ENCODE measurements at regions of chr1 and their contacts with region 1.

Region 1: GRCh38 chr1:111733183-111733991 is 5.8 kb downstream of the INKA2 start:
- DNase-seq: peak in 1 of 10 donors; percentile 63
- H3K4me3 ChIP-seq: peak overlapping the region in 31 of 59 donors; percentile 1 to 84 (median 19)
- H3K27ac ChIP-seq: peak overlapping the region in 56 of 59 donors; percentile 14 to 96 (median 70)
- H3K27me3 ChIP-seq: no peaks in the 10 kb centered on the region
- CTCF ChIP-seq: no peak

Region 2: GRCh38 chr1:110548381-110548780 is 1185.0 kb before region 1 on chr1:
- intact Hi-C with region 1: no loop called
- DNase-seq: peak in 2 of 10 donors; percentile 46 to 68
- H3K4me3 ChIP-seq: no peak overlapping the region
- H3K27ac ChIP-seq: no peak overlapping the region
- H3K27me3 ChIP-seq: no peaks in the 10 kb centered on the region
- CTCF ChIP-seq: peak in 53 of 56 donors; percentile 19 to 67 (median 49)

Region 3: GRCh38 chr1:111720274-111720976 is 13.0 kb before region 1 on chr1:
- intact Hi-C with region 1: loop called in 1 of 2 experiments (anchors 2 kb)
- DNase-seq: no peak
- H3K4me3 ChIP-seq: no peak overlapping the region
- H3K27ac ChIP-seq: peak overlapping the region in 49 of 59 donors; percentile 4 to 79 (median 58)
- H3K27me3 ChIP-seq: no peaks in the 10 kb centered on the region
- CTCF ChIP-seq: no peak

Region 4: GRCh38 chr1:111789666-111790316 is 56.4 kb after region 1 on chr1:
- intact Hi-C with region 1: no loop called
- DNase-seq: no peak
- H3K4me3 ChIP-seq: no peak overlapping the region
- H3K27ac ChIP-seq: peak overlapping the region in 44 of 59 donors; percentile 7 to 89 (median 54)
- H3K27me3 ChIP-seq: no peaks in the 10 kb centered on the region
- CTCF ChIP-seq: peak in 45 of 56 donors; percentile 11 to 68 (median 34)